CD4-positive, alpha-beta T cell (primary cell): ENCODE measurements at regions of chr2 and their contacts with region 1.

Region 1: DNA sequence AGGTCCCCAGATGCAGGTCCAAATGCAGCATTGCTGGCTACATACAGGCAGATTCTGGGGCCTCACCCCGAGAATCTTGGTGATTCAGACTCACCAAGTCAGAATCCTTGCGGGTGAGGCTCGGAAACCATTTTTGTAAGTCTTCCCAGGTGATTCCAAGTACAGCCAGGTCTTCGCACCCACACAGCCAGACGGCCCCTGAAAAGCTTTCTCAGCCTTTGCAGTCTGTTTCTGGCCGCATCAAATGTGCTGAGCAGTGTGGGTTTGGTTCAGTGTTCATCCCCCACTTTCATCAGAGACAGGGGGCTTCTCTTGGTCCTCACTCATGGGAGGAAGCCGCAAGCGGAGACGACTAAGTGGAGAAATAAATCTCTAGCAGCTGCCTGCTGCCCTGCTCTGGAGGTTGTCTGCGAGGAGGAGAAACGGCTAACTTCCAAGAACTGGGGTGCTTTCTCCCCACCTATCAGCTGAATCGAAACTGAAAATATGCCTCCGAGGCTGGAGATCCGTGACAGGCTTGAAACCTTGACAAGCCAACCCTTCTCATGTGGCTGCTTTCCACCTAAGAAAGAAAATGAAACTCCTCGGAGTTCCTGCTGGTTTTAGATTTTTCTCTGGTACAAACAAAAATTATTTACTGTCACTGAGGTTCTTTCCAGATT is 8.9 kb upstream of the TMEM185B start:
- DNase-seq: peak; percentile 32 to 91 (median 54)
- ATAC-seq: peak; percentile 90
- H3K4me3 ChIP-seq: peak overlapping the region; percentile 70
- H3K4me3 Mint-ChIP-seq: peak overlapping the region; percentile 95
- H3K27ac ChIP-seq: peak overlapping the region; percentile 66 to 80
- H3K27ac Mint-ChIP-seq: peak overlapping the region; percentile 95
- H3K4me1 ChIP-seq: peaks cover 45% of the 10 kb centered on the region
- H3K4me1 Mint-ChIP-seq: peaks cover 62% of the 10 kb centered on the region
- H3K27me3 ChIP-seq: no peaks in the 10 kb centered on the region
- H3K27me3 Mint-ChIP-seq: no peaks in the 10 kb centered on the region
- CTCF ChIP-seq: no peak

Region 2: GRCh38 chr2:120252225-120253021 is 20.3 kb after region 1 on chr2 and contains the start of gene RALB:
- CTCF ChIA-PET with region 1: no interaction called
- POLR2A ChIA-PET with region 1: interaction called, 57 read pairs
- intact Hi-C with region 1: loop called (anchors 2 kb)
- DNase-seq: peak; percentile 95 to 99 (median 98)
- ATAC-seq: peak; percentile 95
- H3K4me3 ChIP-seq: peak within 1 kb of the TSS; percentile 83
- H3K4me3 Mint-ChIP-seq: peak within 1 kb of the TSS; percentile 97
- H3K27ac ChIP-seq: peak within 1 kb of the TSS; percentile 35 to 76
- H3K27ac Mint-ChIP-seq: peak within 1 kb of the TSS; percentile 87
- H3K4me1 ChIP-seq: peaks cover 20% of the 10 kb centered on the region
- H3K4me1 Mint-ChIP-seq: peaks cover 50% of the 10 kb centered on the region
- H3K27me3 ChIP-seq: peaks cover 0 to 3% of the 10 kb centered on the region in 2 experiments
- H3K27me3 Mint-ChIP-seq: peaks cover 8% of the 10 kb centered on the region
- CTCF ChIP-seq: no peak
- total RNA-seq, gene RALB: 3.1 to 3.6 TPM

Region 3: DNA sequence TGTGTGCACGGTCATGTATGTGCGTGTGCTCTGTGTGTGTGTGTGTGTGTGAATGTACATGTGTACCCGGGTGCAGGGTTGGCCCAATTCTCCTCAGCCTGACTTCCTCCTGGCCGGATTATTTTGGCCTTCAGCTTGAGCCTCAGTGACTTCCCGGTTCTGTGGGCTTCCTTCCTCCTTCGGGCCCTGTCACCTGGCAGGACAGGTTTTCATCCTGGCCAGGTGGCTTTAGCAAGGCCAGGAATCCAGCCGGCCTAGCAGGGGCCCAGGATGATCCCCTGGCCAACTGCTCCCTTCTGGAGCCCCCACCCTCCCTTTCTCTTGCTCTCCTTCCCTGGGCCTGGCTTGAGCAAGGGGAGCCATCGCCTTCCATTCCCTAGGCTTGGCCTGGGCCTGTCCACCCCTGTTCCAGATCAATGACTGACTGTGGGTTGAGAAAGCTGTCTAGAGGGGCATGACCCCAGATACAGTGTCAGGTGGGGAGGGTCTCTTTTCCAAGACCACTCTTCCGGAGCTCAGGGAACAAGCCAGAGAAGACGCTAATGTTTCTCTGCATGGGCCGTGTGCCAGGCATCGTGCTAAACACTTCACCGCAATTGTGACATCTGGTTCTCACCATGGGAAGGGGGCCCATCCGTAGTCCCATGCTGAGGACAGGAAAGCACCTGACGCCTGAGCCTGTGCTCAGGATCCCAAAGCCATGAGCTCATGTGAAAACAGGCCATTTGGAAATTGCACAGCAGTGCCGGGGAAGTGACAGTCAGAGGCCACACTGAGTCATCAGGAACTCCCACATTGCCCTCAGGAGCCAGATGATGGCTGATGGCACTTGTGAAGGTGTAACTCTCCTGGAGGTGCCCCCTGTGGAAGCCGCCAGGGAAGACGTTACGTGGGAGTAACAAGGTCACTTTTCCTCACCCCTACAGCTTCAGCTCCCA is 254.6 kb after region 1 on chr2:
- CTCF ChIA-PET with region 1: no interaction called
- POLR2A ChIA-PET with region 1: no interaction called
- intact Hi-C with region 1: no loop called
- DNase-seq: no peak
- ATAC-seq: no peak
- H3K4me3 ChIP-seq: no peak overlapping the region
- H3K4me3 Mint-ChIP-seq: no peak overlapping the region
- H3K27ac ChIP-seq: no peak overlapping the region
- H3K27ac Mint-ChIP-seq: no peak overlapping the region
- H3K4me1 ChIP-seq: no peaks in the 10 kb centered on the region
- H3K4me1 Mint-ChIP-seq: no peaks in the 10 kb centered on the region
- H3K27me3 ChIP-seq: no peaks in the 10 kb centered on the region
- H3K27me3 Mint-ChIP-seq: peaks cover 6% of the 10 kb centered on the region
- CTCF ChIP-seq: no peak